Heart left ventricle (tissue), 16 donors: ENCODE measurements at regions of chr14 and their contacts with region 1.

Region 1: GRCh38 chr14:38721822-38722431 is 381.1 kb downstream of the SEC23A start:
- DNase-seq: peak in 3 of 5 donors; percentile 33 to 45 (median 39)
- ATAC-seq: peak; percentile 61 to 81 (median 70)
- H3K4me3 ChIP-seq: no peak overlapping the region
- H3K27ac ChIP-seq: no peak overlapping the region
- H3K4me1 ChIP-seq: peaks cover 0 to 9% (median 0%) of the 10 kb centered on the region in 12 donors
- H3K27me3 ChIP-seq: no peaks in the 10 kb centered on the region
- CTCF ChIP-seq: peak; percentile 59 to 81 (median 66)
- POLR2A ChIP-seq: no peak

Region 2: DNA sequence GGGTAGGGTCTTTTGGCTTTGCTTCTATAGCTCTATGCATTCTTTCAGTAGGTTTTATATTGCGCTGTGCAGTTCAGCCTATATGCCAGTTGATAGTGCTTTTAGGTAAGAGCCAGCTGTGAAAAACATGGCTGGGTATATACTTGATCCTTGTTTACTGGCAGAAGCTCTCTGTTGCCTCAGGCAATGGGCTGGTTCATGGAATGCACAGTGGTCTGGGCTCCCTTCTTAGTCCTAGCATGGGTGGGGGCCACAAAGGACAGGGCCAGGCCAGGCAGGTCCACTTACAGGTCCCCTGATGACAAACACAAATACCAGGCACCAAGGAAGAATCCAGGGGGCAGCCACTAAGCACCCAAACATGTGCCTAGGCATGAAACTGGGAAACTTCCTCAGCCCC is 140.4 kb after region 1 on chr14:
- intact Hi-C with region 1: loop called in 9 of 10 experiments (anchors 1 to 5 kb)
- DNase-seq: no peak
- ATAC-seq: no peak
- H3K4me3 ChIP-seq: no peak overlapping the region
- H3K27ac ChIP-seq: no peak overlapping the region
- H3K4me1 ChIP-seq: peaks cover 0 to 8% (median 0%) of the 10 kb centered on the region in 12 donors
- H3K27me3 ChIP-seq: no peaks in the 10 kb centered on the region
- CTCF ChIP-seq: no peak
- POLR2A ChIP-seq: no peak

Region 3: GRCh38 chr14:39015360-39015961 is 293.5 kb after region 1 on chr14:
- intact Hi-C with region 1: loop called (anchors 2 to 10 kb)
- DNase-seq: peak in 1 of 5 donors; percentile 16
- ATAC-seq: no peak
- H3K4me3 ChIP-seq: no peak overlapping the region
- H3K27ac ChIP-seq: no peak overlapping the region
- H3K4me1 ChIP-seq: peaks cover 0 to 4% (median 0%) of the 10 kb centered on the region in 12 donors
- H3K27me3 ChIP-seq: no peaks in the 10 kb centered on the region
- CTCF ChIP-seq: peak; percentile 67 to 92 (median 80)
- POLR2A ChIP-seq: no peak